ENCODE measurements at regions of chr2 and their contacts with region 1.

Region 1: GRCh38 chr2:75403991-75404428 is 156.7 kb downstream of the EVA1A start:
- DNase-seq: peak; percentile 57
- H3K4me3 ChIP-seq: no peak overlapping the region
- H3K27ac ChIP-seq: no peak overlapping the region
- H3K4me1 ChIP-seq: no peaks in the 10 kb centered on the region
- H3K27me3 ChIP-seq: peaks cover 14 to 30% of the 10 kb centered on the region in 2 experiments
- CTCF ChIP-seq: peak; percentile 52 to 62
- POLR2A ChIP-seq: no peak

Region 2: DNA sequence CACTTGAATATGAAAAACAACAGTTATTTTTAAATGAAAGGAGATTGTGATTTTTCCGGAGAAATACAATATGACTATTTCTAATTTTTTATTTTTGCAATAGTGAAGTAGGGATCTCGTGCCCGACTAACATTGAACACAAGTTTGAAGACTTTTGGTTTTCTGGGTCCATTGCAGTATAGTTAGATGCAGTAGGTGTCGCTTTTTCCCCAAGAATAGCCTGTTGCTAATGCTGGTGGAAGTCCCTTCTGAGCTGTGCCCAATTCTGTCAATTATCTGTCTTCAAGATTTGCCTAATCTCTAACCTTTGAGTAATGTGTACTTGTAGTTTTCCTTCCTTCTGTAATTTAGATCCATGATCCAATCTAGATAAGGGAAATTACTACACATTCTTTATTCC is 713.4 kb before region 1 on chr2:
- CTCF ChIA-PET with region 1: interaction called, 4 read pairs
- POLR2A ChIA-PET with region 1: no interaction called
- dilution Hi-C with region 1: no loop called
- intact Hi-C with region 1: loop called (anchors 2 kb)
- DNase-seq: peak; percentile 68
- H3K4me3 ChIP-seq: no peak overlapping the region
- H3K27ac ChIP-seq: no peak overlapping the region
- H3K4me1 ChIP-seq: no peaks in the 10 kb centered on the region
- H3K27me3 ChIP-seq: peaks cover 22% of the 10 kb centered on the region in 2 experiments
- CTCF ChIP-seq: peak; percentile 61 to 65
- POLR2A ChIP-seq: no peak

Region 3: GRCh38 chr2:74919827-74920226 is 484.2 kb before region 1 on chr2:
- CTCF ChIA-PET with region 1: interaction called, 5 read pairs
- POLR2A ChIA-PET with region 1: no interaction called
- dilution Hi-C with region 1: no loop called
- intact Hi-C with region 1: loop called (anchors 1 kb)
- DNase-seq: peak; percentile 47
- H3K4me3 ChIP-seq: peak overlapping the region in 1 of 3 experiments; percentile 33
- H3K27ac ChIP-seq: no peak overlapping the region
- H3K4me1 ChIP-seq: no peaks in the 10 kb centered on the region
- H3K27me3 ChIP-seq: no peaks in the 10 kb centered on the region
- CTCF ChIP-seq: peak; percentile 84 to 93
- POLR2A ChIP-seq: no peak

Region 4: GRCh38 chr2:75064691-75065396 is 339.2 kb before region 1 on chr2:
- CTCF ChIA-PET with region 1: interaction called, 10 read pairs
- POLR2A ChIA-PET with region 1: no interaction called
- dilution Hi-C with region 1: no loop called
- intact Hi-C with region 1: loop called (anchors 1 kb)
- DNase-seq: peak; percentile 66
- H3K4me3 ChIP-seq: no peak overlapping the region
- H3K27ac ChIP-seq: no peak overlapping the region
- H3K4me1 ChIP-seq: no peaks in the 10 kb centered on the region
- H3K27me3 ChIP-seq: no peaks in the 10 kb centered on the region
- CTCF ChIP-seq: peak; percentile 88 to 91
- POLR2A ChIP-seq: no peak

Region 5: GRCh38 chr2:75098856-75099255 is 305.2 kb before region 1 on chr2:
- CTCF ChIA-PET with region 1: no interaction called
- POLR2A ChIA-PET with region 1: no interaction called
- dilution Hi-C with region 1: no loop called
- intact Hi-C with region 1: loop called (anchors 1 kb)
- DNase-seq: peak; percentile 28
- H3K4me3 ChIP-seq: no peak overlapping the region
- H3K27ac ChIP-seq: no peak overlapping the region
- H3K4me1 ChIP-seq: no peaks in the 10 kb centered on the region
- H3K27me3 ChIP-seq: no peaks in the 10 kb centered on the region
- CTCF ChIP-seq: peak; percentile 20 to 35
- POLR2A ChIP-seq: no peak

Region 6: DNA sequence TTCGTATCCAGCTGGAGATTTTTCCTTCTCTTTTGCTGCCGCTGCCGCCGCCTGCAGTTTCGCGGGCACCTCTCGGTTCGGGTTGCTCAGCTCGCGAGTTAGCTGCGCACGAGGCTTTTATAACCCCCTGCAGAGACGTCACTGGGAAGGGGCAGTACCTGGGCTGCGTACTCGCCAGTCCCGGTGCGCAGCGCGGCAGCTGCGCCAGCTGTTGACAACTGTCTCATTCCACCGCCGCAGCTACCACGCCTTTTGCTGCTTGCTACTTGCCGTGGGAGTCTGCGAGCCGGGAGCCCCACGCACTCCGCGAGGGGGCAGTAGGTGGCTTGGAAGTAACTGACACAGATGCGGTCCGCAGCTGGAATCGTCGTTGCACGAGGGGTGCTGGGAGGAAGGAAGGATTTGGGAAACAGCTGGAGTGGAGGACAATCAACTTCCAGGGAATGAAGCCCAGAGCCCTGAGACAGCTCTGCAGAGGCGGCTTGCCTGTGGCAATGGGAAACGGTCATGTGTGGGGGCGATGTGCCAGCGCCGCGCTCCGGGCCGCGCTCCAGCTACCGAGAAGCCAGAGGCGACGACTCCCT is 204.5 kb before region 1 on chr2 and contains the start of gene TACR1:
- CTCF ChIA-PET with region 1: interaction called, 7 read pairs
- POLR2A ChIA-PET with region 1: no interaction called
- dilution Hi-C with region 1: no loop called
- intact Hi-C with region 1: loop called (anchors 1 kb)
- DNase-seq: peak; percentile 42
- H3K4me3 ChIP-seq: no peak within 1 kb of the TSS
- H3K27ac ChIP-seq: no peak within 1 kb of the TSS
- H3K4me1 ChIP-seq: no peaks in the 10 kb centered on the region
- H3K27me3 ChIP-seq: peaks cover 54 to 62% of the 10 kb centered on the region in 2 experiments
- CTCF ChIP-seq: peak; percentile 50 to 62
- POLR2A ChIP-seq: no peak
- total RNA-seq, gene TACR1: not detected in 2 replicates

Region 7: GRCh38 chr2:75466708-75467311 is 62.8 kb after region 1 on chr2:
- CTCF ChIA-PET with region 1: no interaction called
- POLR2A ChIA-PET with region 1: no interaction called
- dilution Hi-C with region 1: no loop called
- intact Hi-C with region 1: no loop called
- DNase-seq: peak; percentile 18
- H3K4me3 ChIP-seq: no peak overlapping the region
- H3K27ac ChIP-seq: no peak overlapping the region
- H3K4me1 ChIP-seq: no peaks in the 10 kb centered on the region
- H3K27me3 ChIP-seq: peaks cover 5 to 24% of the 10 kb centered on the region in 2 experiments
- CTCF ChIP-seq: peak; percentile 44
- POLR2A ChIP-seq: no peak